ENCODE measurements at regions of chr6 and their contacts with region 1.

Region 1: GRCh38 chr6:129730477-129731165 is 20.6 kb upstream of the ARHGAP18 start:
- DNase-seq: peak in 2 of 3 donors; percentile 35 to 53
- H3K4me3 ChIP-seq: no peak overlapping the region
- H3K4me3 Mint-ChIP-seq: no peak overlapping the region
- H3K27ac ChIP-seq: no peak overlapping the region
- H3K27ac Mint-ChIP-seq: no peak overlapping the region
- H3K4me1 ChIP-seq: no peaks in the 10 kb centered on the region
- H3K4me1 Mint-ChIP-seq: peaks cover 10% of the 10 kb centered on the region
- H3K27me3 ChIP-seq: no peaks in the 10 kb centered on the region
- H3K27me3 Mint-ChIP-seq: no peaks in the 10 kb centered on the region
- CTCF ChIP-seq: peak; percentile 76

Region 2: GRCh38 chr6:129603741-129604140 is 126.9 kb before region 1 on chr6:
- intact Hi-C with region 1: loop called in 1 of 2 experiments (anchors 5 kb)
- DNase-seq: peak in 1 of 3 donors; percentile 12
- H3K4me3 ChIP-seq: no peak overlapping the region
- H3K4me3 Mint-ChIP-seq: no peak overlapping the region
- H3K27ac ChIP-seq: no peak overlapping the region
- H3K27ac Mint-ChIP-seq: no peak overlapping the region
- H3K4me1 ChIP-seq: no peaks in the 10 kb centered on the region
- H3K4me1 Mint-ChIP-seq: peaks cover 4% of the 10 kb centered on the region
- H3K27me3 ChIP-seq: no peaks in the 10 kb centered on the region
- H3K27me3 Mint-ChIP-seq: peaks cover 0 to 2% (median 0%) of the 10 kb centered on the region in 3 donors
- CTCF ChIP-seq: no peak

Measured in CD14-positive monocyte (primary cell).